ENCODE measurements at regions of chr5 and their contacts with region 1.

Region 1: GRCh38 chr5:12805165-12805707 is 901.0 kb upstream of the CTNND2 start:
- DNase-seq: no peak
- H3K4me3 ChIP-seq: no peak overlapping the region
- H3K27ac ChIP-seq: no peak overlapping the region
- H3K4me1 ChIP-seq: no peaks in the 10 kb centered on the region
- H3K27me3 ChIP-seq: no peaks in the 10 kb centered on the region
- CTCF ChIP-seq: no peak
- POLR2A ChIP-seq: no peak

Region 2: GRCh38 chr5:12825163-12825562 is 19.9 kb after region 1 on chr5:
- intact Hi-C with region 1: loop called (anchors 1 kb)
- DNase-seq: no peak
- H3K4me3 ChIP-seq: no peak overlapping the region
- H3K27ac ChIP-seq: no peak overlapping the region
- H3K4me1 ChIP-seq: no peaks in the 10 kb centered on the region
- H3K27me3 ChIP-seq: no peaks in the 10 kb centered on the region
- CTCF ChIP-seq: no peak
- POLR2A ChIP-seq: no peak

Region 3: DNA sequence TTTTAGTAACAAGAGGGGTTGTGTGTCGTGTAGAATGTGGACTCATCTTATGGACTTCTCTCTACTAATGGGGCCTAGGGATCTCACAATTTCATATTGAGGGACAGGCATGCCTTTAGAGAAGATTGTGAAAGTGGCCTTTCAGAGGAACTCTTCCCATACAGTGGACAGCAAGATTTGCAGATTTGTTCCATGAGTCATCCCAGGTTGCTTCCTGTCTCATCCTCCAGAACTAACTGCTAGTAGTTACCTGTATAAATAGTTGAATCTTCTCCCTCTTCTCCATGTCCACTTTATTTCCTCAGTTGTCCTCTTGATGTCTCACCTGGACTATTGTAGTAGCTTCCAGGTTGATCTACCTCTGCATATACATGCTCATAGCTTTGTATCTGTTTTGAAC is 96.5 kb after region 1 on chr5:
- intact Hi-C with region 1: no loop called
- DNase-seq: no peak
- H3K4me3 ChIP-seq: no peak overlapping the region
- H3K27ac ChIP-seq: no peak overlapping the region
- H3K4me1 ChIP-seq: no peaks in the 10 kb centered on the region
- H3K27me3 ChIP-seq: no peaks in the 10 kb centered on the region
- CTCF ChIP-seq: no peak
- POLR2A ChIP-seq: no peak